ENCODE measurements at regions of chr17 and their contacts with region 1.

Region 1: GRCh38 chr17:31564883-31565301 is 173.4 kb downstream of the RAB11FIP4 start:
- DNase-seq: no peak
- H3K4me3 ChIP-seq: no peak overlapping the region
- H3K4me3 Mint-ChIP-seq: no peak overlapping the region
- H3K27ac Mint-ChIP-seq: no peak overlapping the region
- H3K4me1 ChIP-seq: peaks cover 18% of the 10 kb centered on the region
- H3K4me1 Mint-ChIP-seq: peaks cover 30% of the 10 kb centered on the region
- H3K27me3 ChIP-seq: no peaks in the 10 kb centered on the region
- H3K27me3 Mint-ChIP-seq: no peaks in the 10 kb centered on the region
- CTCF ChIP-seq: no peak

Region 2: GRCh38 chr17:31631766-31632165 is 66.9 kb after region 1 on chr17:
- CTCF ChIA-PET with region 1: no interaction called
- POLR2A ChIA-PET with region 1: no interaction called
- intact Hi-C with region 1: no loop called
- DNase-seq: no peak
- H3K4me3 ChIP-seq: no peak overlapping the region
- H3K4me3 Mint-ChIP-seq: no peak overlapping the region
- H3K27ac Mint-ChIP-seq: no peak overlapping the region
- H3K4me1 ChIP-seq: no peaks in the 10 kb centered on the region
- H3K4me1 Mint-ChIP-seq: no peaks in the 10 kb centered on the region
- H3K27me3 ChIP-seq: no peaks in the 10 kb centered on the region
- H3K27me3 Mint-ChIP-seq: peaks cover 4% of the 10 kb centered on the region
- CTCF ChIP-seq: no peak

Region 3: DNA sequence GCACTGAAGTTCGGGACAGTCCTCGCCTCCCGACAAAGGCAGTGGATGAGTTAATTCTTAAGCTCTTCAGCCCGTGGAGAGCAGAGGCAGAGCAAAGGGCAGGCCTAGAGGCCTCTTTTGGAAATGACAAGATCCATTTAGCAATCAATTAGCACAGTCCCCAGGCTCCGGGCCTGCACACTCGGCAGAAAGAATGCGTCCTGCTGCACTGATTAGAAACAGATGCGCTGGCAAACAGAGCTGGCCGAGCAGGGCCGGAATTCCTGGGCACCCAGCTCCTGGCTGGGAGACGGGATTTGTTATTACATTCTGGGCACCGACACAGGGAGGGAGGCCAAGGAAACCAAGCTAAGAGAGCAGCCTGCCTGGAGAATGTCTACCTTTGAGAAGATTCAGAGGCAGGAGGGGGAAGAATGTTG is 131.3 kb after region 1 on chr17:
- CTCF ChIA-PET with region 1: interaction called, 5 read pairs
- POLR2A ChIA-PET with region 1: no interaction called
- intact Hi-C with region 1: loop called (anchors 10 kb)
- DNase-seq: peak; percentile 69 to 72
- H3K4me3 ChIP-seq: no peak overlapping the region
- H3K4me3 Mint-ChIP-seq: peak overlapping the region; percentile 27
- H3K27ac Mint-ChIP-seq: peak overlapping the region; percentile 16
- H3K4me1 ChIP-seq: peaks cover 10% of the 10 kb centered on the region
- H3K4me1 Mint-ChIP-seq: peaks cover 8% of the 10 kb centered on the region
- H3K27me3 ChIP-seq: no peaks in the 10 kb centered on the region
- H3K27me3 Mint-ChIP-seq: no peaks in the 10 kb centered on the region
- CTCF ChIP-seq: peak in 1 of 2 experiments; percentile 21